ENCODE measurements at regions of chr21 and their contacts with region 1.

Region 1: DNA sequence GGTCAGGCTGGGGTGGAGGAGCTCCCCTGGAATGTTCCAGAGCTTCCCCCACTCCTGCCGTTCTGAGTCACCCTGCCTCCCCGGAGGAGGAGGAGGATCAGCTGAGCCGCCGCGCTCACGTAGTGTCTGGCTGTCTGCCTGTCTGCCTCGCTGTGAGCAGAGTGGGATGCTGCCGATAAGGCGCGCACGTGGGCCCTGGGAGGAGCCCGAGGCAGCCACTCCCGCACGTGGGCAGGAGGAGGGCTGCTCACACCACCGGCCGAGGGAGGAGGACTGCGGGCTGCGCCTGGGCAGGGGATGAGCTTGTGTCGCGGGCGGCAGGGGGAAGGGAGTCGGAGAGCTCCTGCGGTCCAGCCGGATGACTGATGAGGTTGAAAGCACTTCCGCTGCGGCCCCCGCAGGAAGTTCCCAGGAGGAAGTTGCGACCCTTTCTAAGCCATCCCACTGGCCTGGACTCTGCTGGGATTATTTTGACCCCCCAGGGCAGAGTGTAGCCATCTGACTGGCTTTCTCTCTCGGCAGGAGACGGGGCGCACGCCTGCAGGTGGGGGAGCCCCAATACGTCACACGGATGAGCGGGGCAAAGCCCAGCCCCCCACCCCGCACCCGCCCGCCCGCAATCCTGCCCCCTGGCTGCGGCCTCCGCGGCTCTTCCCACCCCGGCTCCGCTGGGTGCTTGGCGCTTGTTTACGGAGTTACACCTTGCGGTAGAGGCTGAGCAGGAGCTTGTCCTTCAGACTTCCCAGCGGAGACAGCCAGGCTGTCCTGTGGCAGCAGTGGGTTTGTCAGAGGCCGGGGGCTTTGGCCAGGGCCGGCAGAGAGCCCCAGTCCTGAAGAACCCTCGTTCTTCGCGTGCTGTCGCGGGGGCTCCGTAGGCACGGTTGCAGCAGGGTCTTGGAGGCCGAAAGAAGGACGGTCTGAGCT is 9.8 kb downstream of the PDXK start:
- DNase-seq: peak; percentile 54 to 87
- H3K4me3 ChIP-seq: peak overlapping the region; percentile 39 to 83 (median 71)
- H3K27ac ChIP-seq: peak overlapping the region; percentile 83; the same call in 1 of the 2 replicates
- H3K4me1 ChIP-seq: peaks cover 0 to 21% (median 11%) of the 10 kb centered on the region in 4 experiments; a peak in 6 of 7 replicates
- H3K27me3 ChIP-seq: no peaks in the 10 kb centered on the region
- CTCF ChIP-seq: peak in 1 of 3 experiments; percentile 15; a peak in 1 of 4 replicates
- EP300 ChIP-seq: no peak
- POLR2A ChIP-seq: peak in 1 of 2 experiments; percentile 82; a peak in 2 of 3 replicates
- RAD21 ChIP-seq: 0 out of 4 replicates have a peak, but pooled peaks of 1 of the 2 experiments have one; percentile 14

Region 2: GRCh38 chr21:43696191-43696607 is 32.5 kb before region 1 on chr21:
- CTCF ChIA-PET with region 1: interaction called, 11 read pairs
- POLR2A ChIA-PET with region 1: interaction called, 5 read pairs
- DNase-seq: no peak
- H3K4me3 ChIP-seq: no peak overlapping the region
- H3K27ac ChIP-seq: no peak overlapping the region
- H3K4me1 ChIP-seq: no peaks in the 10 kb centered on the region
- H3K27me3 ChIP-seq: no peaks in the 10 kb centered on the region
- CTCF ChIP-seq: no peak
- EP300 ChIP-seq: no peak
- POLR2A ChIP-seq: no peak
- RAD21 ChIP-seq: no peak

Region 3: GRCh38 chr21:43703035-43703880 is 25.5 kb before region 1 on chr21:
- CTCF ChIA-PET with region 1: interaction called, 12 read pairs
- POLR2A ChIA-PET with region 1: interaction called, 5 read pairs
- DNase-seq: peak in 1 of 2 experiments; percentile 67
- H3K4me3 ChIP-seq: no peak overlapping the region
- H3K27ac ChIP-seq: no peak overlapping the region
- H3K4me1 ChIP-seq: peaks cover 0 to 14% (median 5%) of the 10 kb centered on the region in 4 experiments; a peak in 6 of 7 replicates
- H3K27me3 ChIP-seq: no peaks in the 10 kb centered on the region
- CTCF ChIP-seq: no peak
- EP300 ChIP-seq: no peak
- POLR2A ChIP-seq: no peak
- RAD21 ChIP-seq: no peak

Region 4: DNA sequence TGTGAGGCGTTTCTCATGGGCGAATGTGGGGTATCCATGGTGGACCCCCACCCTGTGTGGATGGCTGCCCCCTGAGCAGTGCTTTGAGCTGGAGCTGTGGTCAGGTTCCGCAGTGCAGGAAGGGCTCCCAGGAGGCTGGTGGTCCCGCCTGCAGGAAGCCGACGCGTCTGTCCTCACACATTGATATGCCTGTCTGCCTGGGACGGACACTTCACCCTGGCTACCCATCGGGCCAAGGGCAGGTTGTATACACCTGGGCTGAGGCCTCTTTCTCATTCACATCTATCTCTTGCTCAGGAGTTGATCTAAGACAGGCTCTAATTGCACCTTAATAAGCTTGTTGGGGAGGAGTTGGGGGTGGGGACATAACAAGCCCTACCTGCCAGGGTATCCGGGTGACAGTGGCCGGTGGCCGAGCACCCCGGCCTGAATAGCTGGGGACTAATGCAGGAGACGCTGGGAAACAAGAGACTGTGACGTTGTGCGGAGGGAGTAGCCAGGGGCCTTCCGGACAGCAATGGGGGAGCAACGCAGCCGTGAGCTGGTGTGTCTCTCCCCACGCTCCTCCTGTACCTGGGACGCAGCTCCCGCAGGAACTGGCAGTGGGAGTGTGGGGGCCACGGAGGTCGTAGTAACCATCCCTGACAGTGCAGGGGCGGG is 11.9 kb after region 1 on chr21:
- CTCF ChIA-PET with region 1: interaction called, 13 read pairs
- POLR2A ChIA-PET with region 1: interaction called, 29 read pairs
- DNase-seq: peak; percentile 68 to 69
- H3K4me3 ChIP-seq: no peak overlapping the region
- H3K27ac ChIP-seq: peak overlapping the region; percentile 18; the same call in 1 of the 2 replicates
- H3K4me1 ChIP-seq: peaks cover 0 to 9% (median 4%) of the 10 kb centered on the region in 4 experiments; a peak in 5 of 7 replicates
- H3K27me3 ChIP-seq: no peaks in the 10 kb centered on the region
- CTCF ChIP-seq: no peak
- EP300 ChIP-seq: no peak
- POLR2A ChIP-seq: no peak
- RAD21 ChIP-seq: no peak

Region 5: DNA sequence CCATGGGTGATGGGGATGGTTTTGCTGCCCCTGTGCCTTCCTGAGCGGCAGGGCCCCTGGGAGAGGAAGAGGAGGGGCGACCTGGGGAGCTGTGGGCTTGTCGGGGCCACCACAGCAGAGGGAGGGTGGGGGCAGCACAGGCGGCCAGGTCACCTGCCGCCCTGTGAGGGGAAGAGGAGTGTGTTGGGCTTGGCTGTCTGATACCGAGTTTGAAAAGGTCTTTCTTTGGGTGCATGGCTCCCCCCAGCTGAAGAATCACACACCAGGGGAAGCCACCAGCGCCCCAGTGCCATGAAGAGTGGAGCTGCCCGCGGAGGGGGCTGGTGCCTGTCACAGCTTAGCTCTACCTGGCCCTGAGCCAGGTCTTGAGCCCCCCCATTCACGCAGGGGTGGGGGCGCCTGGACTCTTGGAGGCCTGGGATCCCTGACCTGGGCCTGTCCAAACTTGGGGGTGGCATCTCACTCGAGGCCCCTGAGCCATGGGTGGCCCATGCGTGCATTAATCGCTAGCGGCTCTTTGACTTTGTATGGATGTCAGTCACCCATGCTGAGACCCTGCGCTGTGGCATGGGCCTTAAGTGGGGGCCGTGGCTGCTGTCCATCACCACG is 21.0 kb after region 1 on chr21:
- CTCF ChIA-PET with region 1: interaction called, 5 read pairs
- POLR2A ChIA-PET with region 1: interaction called, 15 read pairs
- DNase-seq: no peak
- H3K4me3 ChIP-seq: no peak overlapping the region
- H3K27ac ChIP-seq: no peak overlapping the region; the same call in 1 of the 2 replicates
- H3K4me1 ChIP-seq: no peaks in the 10 kb centered on the region
- H3K27me3 ChIP-seq: no peaks in the 10 kb centered on the region
- CTCF ChIP-seq: no peak
- EP300 ChIP-seq: no peak
- POLR2A ChIP-seq: no peak
- RAD21 ChIP-seq: no peak

Region 6: GRCh38 chr21:43767984-43768867 is 39.5 kb after region 1 on chr21:
- CTCF ChIA-PET with region 1: interaction called, 8 read pairs
- POLR2A ChIA-PET with region 1: interaction called, 17 read pairs
- DNase-seq: peak in 1 of 2 experiments; percentile 56
- H3K4me3 ChIP-seq: no peak overlapping the region
- H3K27ac ChIP-seq: peak overlapping the region; percentile 4; the same call in 1 of the 2 replicates
- H3K4me1 ChIP-seq: peaks cover 0 to 21% (median 15%) of the 10 kb centered on the region in 4 experiments; a peak in 6 of 7 replicates
- H3K27me3 ChIP-seq: no peaks in the 10 kb centered on the region
- CTCF ChIP-seq: no peak
- EP300 ChIP-seq: no peak
- POLR2A ChIP-seq: no peak
- RAD21 ChIP-seq: no peak

Measured in H1 (cell line).